Endothelial cell of umbilical vein (primary cell): ENCODE measurements at regions of chr20 and their contacts with region 1.

Region 1: DNA sequence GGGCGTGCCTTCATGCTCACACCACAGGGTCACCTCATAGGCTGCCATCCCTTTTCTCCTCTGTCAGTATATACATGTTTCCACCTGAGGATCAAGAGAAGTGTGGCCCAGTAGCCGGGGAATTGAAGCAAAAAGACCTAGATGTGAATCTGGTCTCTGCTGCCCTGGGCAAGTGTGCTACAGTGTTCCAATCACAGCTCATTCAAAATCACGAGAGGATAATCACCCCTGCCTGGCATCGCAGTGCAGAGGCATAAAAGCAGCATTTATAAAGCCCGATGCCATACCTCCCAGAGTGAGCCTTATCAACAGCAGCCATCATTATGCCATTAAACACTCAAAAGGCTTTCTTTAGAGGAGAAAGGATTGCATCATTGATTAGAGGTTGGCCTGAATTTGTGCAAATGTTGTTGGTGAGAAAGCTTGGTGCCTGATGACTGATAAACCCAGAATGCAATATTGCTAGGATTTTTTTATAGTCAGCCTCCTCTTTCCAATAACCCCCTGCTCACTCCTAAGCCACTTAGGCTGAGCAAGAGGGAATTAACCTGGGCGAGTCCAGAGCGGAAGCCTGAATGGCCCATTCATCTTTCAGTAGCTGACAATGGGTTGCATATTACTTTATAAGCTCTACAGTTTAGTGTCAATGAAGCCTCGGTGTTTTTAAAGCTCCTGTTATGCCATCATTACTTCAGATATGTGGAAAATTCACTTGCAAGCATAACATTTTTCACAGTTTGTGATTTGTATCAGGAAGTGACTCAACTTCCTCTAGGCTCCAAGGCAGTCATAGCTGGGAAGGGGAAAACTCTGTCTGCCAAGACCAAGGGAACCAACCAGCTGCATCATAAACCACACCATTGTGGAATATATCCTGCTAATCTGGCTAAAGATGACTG is 92.5 kb upstream of the NXT1 start:
- DNase-seq: peak; percentile 97
- H3K4me3 ChIP-seq: no peak overlapping the region
- H3K27ac ChIP-seq: peak overlapping the region; percentile 98
- H3K4me1 ChIP-seq: peaks cover 39% of the 10 kb centered on the region
- H3K27me3 ChIP-seq: no peaks in the 10 kb centered on the region
- CTCF ChIP-seq: no peak
- POLR2A ChIP-seq: peak; percentile 25

Region 2: DNA sequence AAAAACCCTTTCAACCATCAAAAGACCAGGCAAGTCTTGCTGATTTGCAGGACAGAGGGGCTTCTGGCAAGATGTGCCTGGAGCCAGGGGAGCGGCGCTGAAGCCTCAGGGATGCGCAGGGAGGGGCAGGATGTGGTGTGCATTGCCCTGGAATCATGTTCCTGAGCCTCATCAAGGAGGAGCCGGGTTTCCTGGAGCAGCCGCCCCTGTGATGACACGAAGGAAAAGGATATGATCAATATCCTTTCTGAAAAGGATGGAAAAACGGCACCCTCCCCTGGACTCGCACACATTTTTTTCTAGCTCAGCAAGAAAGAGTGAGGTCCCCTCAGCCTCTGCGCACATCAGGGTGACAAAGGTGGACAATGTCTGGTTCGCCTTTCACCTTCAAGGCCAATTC is 396.1 kb before region 1 on chr20:
- CTCF ChIA-PET with region 1: no interaction called
- POLR2A ChIA-PET with region 1: no interaction called
- dilution Hi-C with region 1: no loop called
- intact Hi-C with region 1: loop called (anchors 5 kb)
- DNase-seq: peak; percentile 74
- H3K4me3 ChIP-seq: no peak overlapping the region
- H3K27ac ChIP-seq: peak overlapping the region; percentile 78
- H3K4me1 ChIP-seq: peaks cover 33% of the 10 kb centered on the region
- H3K27me3 ChIP-seq: no peaks in the 10 kb centered on the region
- CTCF ChIP-seq: no peak
- POLR2A ChIP-seq: peak; percentile 47

Region 3: GRCh38 chr20:23235173-23236027 is 22.7 kb before region 1 on chr20:
- CTCF ChIA-PET with region 1: interaction called, 12 read pairs
- POLR2A ChIA-PET with region 1: no interaction called
- dilution Hi-C with region 1: no loop called
- intact Hi-C with region 1: no loop called
- DNase-seq: peak; percentile 72
- H3K4me3 ChIP-seq: no peak overlapping the region
- H3K27ac ChIP-seq: no peak overlapping the region
- H3K4me1 ChIP-seq: peaks cover 5% of the 10 kb centered on the region
- H3K27me3 ChIP-seq: peaks cover 2 to 4% of the 10 kb centered on the region in 2 experiments
- CTCF ChIP-seq: peak; percentile 80 to 85
- POLR2A ChIP-seq: no peak

Region 4: DNA sequence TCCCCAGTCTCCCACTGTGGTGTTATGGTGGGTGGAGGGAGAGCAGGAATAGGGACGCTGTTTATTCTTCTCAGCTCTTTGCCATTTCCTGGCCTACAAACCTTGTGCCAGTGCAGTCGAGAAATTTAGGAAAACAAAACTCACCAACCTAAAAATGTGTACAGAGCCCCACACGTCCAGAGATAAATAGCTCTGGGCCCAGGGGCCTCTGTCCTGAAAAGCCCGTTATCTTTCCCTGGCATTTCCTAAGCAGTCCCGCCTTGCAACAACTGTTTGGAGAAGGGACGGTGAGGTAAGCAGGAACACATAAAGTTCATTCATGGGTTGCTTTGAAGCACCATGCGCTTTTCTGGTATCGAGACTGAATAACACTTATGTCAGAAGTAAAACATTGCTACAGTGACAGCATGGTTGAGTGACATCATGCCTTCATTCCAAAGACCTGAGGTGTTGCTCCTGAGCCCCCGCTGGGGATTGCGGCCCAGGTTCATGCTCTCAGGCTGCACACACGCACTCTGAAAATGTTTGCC is 12.3 kb after region 1 on chr20:
- CTCF ChIA-PET with region 1: interaction called, 10 read pairs
- POLR2A ChIA-PET with region 1: interaction called, 6 read pairs
- dilution Hi-C with region 1: no loop called
- intact Hi-C with region 1: loop called (anchors 1 kb)
- DNase-seq: peak; percentile 83
- H3K4me3 ChIP-seq: no peak overlapping the region
- H3K27ac ChIP-seq: peak overlapping the region; percentile 76
- H3K4me1 ChIP-seq: peaks cover 17% of the 10 kb centered on the region
- H3K27me3 ChIP-seq: no peaks in the 10 kb centered on the region
- CTCF ChIP-seq: no peak
- POLR2A ChIP-seq: no peak

Region 5: DNA sequence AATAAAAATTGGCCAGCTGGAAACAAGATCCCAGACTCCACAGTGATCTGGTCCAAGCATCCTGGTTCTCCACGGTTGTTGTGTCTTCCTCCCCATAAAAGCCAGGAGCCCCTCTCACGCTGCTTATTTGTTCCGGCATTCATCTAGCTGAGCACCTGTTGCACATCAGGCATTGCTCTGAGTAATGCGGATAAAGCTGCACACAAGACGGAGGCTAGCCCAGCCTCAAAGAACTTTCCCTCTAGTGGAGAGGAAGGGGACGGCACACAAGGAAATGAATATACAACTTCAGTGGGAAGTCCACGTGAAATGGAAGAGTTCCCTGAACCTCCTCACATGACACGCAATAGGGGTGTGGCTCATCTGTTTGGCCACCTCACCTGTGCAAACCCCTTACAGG is 62.2 kb after region 1 on chr20:
- CTCF ChIA-PET with region 1: interaction called, 17 read pairs
- POLR2A ChIA-PET with region 1: interaction called, 10 read pairs
- dilution Hi-C with region 1: no loop called
- intact Hi-C with region 1: loop called (anchors 1 kb)
- DNase-seq: peak; percentile 21
- H3K4me3 ChIP-seq: no peak overlapping the region
- H3K27ac ChIP-seq: no peak overlapping the region
- H3K4me1 ChIP-seq: peaks cover 10% of the 10 kb centered on the region
- H3K27me3 ChIP-seq: peaks cover 0 to 5% of the 10 kb centered on the region in 2 experiments
- CTCF ChIP-seq: peak; percentile 37 to 50
- POLR2A ChIP-seq: no peak

Region 6: GRCh38 chr20:23361598-23362384 is 103.7 kb after region 1 on chr20 and contains the start of gene GZF1:
- CTCF ChIA-PET with region 1: no interaction called
- POLR2A ChIA-PET with region 1: interaction called, 5 read pairs
- dilution Hi-C with region 1: no loop called
- intact Hi-C with region 1: loop called (anchors 1 kb)
- DNase-seq: peak; percentile 100
- H3K4me3 ChIP-seq: peak within 1 kb of the TSS; percentile 65 to 73 (median 67)
- H3K27ac ChIP-seq: peak within 1 kb of the TSS; percentile 90
- H3K4me1 ChIP-seq: peaks cover 40% of the 10 kb centered on the region
- H3K27me3 ChIP-seq: no peaks in the 10 kb centered on the region
- CTCF ChIP-seq: no peak
- POLR2A ChIP-seq: peak; percentile 93
- total RNA-seq, gene GZF1: 10.0 and 12.5 TPM in 2 replicates